ENCODE measurements at regions of chr19 and their contacts with region 1.

Region 1: DNA sequence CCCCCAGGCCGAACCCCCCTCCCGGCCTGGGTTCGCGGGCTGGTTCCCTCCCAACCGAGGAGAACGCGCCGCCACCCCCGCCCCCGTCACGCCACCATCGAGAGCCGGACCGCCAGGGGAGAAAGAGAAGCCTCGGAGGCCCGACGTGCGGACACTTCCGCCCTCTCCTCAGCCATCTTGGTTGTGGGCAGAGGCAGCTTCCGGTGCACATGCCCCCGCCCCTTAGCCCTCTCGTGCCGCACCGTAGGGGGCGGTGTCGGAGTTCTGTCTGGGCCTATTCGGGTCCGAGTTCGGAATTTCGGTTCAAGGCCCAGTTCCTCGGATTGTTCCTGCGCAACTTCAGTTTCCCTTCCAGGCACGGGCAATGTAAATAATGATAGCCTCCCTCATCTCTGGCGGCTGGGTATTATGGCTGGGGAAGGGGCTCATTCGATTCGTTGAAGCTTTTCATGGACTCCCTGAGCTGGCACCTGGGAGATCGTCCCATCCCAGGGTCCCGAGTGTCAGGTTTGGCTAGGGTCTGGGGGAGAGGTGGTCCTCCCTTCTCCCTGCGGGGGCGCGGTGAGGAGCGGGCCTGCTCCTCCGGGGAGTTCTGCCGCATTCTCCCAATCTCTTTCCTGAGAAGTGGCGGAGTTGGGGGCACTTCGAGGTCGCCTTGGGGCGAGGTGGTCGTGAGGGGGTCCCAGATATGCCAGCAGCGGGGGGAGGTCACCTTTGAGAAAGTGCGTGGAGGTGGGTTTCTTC is at the starts of genes IER2 and STX10:
- DNase-seq: peak; percentile 98
- total RNA-seq, gene IER2: 28.4 TPM
- total RNA-seq, gene STX10: 25.7 TPM

Region 2: GRCh38 chr19:12983542-12984142 is 166.7 kb before region 1 on chr19:
- intact Hi-C with region 1: loop called (anchors 5 kb)
- DNase-seq: peak; percentile 90

Region 3: DNA sequence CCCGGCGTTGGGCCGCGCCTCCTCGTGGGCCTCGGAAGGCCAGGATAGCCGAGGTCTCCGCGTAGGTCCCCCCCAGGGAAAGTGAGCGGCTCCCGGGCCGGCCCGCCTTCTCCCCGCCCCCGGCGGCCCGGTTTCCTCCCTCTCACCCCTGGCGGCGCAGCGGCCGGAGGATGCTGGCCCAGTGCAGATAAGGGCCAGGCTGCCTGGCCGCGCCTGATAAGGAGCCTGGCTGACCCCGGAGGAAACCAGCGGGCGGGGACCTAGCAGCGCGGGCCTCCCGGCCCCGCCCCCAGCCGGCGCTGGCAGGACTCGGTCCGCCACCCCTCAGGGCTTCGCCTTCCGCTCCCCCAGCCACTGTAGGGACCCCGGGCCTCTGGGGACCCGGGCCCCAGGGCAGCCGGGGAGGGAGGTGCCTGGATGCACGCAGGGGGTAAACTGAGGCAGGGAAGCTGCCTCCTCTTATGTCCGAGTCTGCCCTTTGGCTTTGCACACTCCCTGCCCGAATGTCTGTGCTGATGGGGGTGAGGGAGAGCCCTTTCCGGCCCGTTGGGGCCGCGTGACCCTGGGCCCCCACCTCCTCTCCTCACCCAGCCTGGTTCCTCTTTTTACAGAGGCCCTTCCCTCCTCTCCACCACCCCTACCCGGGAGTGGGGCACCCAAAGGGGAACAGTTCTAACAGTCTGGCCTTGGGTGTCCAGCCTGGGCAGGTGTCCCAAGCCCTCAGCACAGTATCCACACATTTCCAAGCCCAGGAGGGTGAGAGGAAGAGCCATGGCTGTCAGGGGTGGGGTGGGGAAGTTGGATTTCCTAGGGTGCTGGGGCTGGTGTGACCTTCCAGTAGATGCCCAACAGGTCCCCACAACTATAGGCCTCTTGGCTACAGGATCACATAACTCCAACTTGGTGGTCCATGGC is 47.4 kb before region 1 on chr19 and contains the start of gene LYL1:
- intact Hi-C with region 1: loop called (anchors 2 kb)
- DNase-seq: peak; percentile 96
- total RNA-seq, gene LYL1: 9.4 TPM

Region 4: DNA sequence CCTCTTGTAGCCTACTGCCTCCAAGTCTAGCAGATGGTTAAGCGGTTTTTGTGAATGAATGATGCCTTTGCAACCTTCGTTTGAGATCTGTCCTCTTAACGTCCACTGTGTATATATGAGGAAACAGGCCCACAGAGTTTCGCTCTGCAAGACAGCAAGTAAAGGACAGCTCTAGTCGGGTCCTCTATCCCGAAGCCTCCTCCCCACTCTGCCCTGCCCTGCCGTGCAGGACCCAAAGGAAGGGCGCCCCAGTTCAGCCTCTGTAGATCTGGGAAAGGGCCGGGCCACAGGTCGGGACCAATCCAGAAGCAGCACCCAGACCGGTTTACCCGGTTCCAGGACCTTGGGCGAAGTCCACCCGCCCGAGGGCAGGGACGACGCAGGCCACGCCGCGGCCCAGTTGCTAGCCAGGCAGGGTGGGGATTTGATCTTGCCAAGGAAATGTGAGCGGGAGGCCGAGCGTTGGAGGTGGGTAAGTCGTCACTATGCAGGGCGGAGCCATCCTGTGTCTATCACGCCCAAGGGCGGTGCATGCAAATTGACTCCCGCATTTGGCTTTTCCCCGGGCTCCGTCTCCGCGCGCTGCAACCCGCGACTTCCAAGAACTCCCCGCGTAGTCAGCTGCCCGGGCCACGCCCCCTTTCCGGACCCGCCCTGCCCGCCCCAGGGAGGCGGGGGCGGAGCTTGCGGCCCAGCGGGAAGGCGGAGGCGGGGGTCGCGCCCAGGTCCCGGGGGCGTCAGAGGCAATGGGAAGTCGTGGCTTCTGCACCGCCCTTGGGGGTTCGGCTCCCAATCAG is 12.4 kb after region 1 on chr19:
- intact Hi-C with region 1: loop called (anchors 1 kb)
- DNase-seq: peak; percentile 99

Region 5: DNA sequence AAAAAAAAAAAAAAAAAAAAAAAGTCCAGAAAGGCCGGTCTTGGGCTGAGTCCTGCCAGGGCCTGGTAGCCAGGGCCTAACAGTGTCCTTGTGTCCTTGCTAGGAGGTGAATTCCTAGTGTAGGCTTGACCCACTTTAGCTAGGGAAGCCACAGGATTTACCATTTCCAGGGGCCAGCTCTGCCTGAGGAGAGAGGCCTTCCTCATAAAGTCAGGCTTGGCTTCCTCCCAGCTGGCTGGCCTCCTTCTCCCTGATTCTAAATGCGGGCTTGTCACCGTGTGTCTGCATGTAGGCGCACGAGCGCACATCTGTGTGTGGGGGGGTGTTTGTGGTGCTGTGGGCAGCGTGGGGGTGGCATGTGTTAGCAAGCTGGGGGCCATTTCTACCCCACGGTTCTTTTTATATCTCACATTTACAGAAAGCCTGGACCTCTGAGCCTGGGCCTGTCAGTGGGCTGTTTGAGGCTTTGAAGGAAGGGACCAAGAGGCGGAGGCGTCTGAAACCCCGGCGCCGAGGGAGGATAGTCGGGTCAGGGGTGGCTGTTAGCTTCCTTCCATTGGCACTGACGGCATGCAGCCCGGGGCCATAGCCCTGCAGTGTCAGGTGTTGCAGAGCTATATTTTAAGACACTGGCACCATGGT is 31.5 kb after region 1 on chr19:
- intact Hi-C with region 1: no loop called
- DNase-seq: peak; percentile 88

Region 6: DNA sequence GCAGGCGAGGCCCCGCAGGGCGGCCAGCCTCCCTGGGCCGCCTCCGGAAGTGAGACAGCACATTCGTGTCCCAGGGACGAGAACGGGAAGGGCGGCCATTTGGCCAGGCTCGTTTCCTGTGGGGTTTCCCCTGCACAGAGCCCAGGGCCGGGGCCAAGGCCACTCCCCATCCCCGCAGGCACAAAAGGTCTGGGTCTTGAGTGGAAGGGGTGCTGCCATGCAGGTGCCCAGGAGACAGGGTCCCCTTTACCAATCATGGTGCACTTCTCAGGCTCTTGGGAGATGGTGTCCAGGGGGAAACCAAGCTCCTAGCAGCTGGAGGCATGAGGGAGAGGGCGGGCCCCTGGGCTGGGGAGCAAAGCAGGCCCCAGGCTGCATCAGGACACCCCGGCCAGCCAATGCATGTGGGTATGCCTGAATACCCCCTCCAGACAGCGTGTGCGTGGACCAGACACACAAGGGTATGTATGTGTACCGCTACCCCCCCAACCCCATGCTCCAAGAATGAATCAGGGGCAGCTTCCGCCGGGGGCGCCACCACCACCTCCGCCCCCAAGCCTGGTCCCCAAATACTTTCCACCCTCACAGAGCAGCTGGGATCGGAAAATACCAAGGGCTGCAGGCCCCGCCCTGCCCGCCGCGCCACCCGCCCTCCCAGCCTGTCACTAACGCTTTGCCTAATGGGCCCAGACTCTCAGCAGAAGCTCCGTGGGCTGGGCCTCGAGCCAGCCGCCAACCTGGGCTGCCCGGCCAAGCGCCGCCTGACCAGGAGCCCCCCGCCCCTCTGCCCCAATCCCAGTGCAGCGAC is 689.0 kb after region 1 on chr19:
- intact Hi-C with region 1: loop called (anchors 5 kb)
- DNase-seq: peak; percentile 99

Measured in cardiac septum (tissue), 1 donor.